ENCODE measurements at regions of chr6 and their contacts with region 1.

Region 1: DNA sequence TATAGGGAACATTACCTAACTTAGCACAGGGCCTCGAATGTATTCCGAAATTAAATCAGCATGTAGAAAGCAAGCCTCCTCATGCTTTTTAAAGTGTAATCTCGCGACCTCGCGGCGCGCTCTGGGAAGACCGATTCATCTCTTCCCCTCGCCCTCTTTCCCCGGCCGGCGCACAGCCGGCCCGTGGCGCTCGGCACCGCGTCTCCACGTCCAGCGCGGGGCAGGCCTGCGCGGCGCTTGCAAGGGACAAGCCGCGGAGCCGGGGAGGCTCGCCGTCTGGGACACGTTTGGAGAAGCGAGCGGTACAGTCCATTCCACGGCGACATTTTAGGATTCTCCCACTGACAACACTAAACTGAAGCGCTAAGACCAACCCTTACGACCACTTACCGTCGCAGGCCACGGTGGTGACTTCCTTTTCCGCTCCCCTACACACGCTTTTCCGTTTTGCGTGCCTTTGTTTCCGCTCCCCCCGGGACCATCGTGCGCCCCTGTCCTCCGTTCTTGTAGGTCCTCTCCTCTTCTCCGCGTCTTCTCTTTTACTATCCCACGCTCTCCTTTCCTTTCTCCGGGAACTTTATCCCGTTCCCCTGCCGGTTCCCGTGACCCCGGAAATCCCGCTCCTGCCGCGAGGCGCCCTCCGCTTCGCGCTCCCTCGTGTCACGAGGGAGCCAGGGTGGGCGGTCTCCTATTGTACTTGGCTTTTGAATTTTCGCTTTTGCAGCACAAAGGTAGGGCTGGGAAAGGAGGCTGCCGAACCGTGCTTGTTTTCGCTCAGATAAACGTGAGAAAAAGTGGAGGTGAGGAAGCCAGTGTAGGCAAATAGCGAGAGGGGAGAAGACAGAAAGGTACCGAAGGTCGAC is at the start of gene ECHDC1:
- DNase-seq: peak; percentile 57
- ATAC-seq: peak; percentile 69
- H3K4me3 Mint-ChIP-seq: no peak within 1 kb of the TSS
- H3K27ac Mint-ChIP-seq: no peak within 1 kb of the TSS
- H3K4me1 Mint-ChIP-seq: peaks cover 12% of the 10 kb centered on the region
- H3K27me3 Mint-ChIP-seq: no peaks in the 10 kb centered on the region
- CTCF ChIP-seq: no peak
- total RNA-seq, gene ECHDC1: 57.3 and 59.7 TPM in 2 replicates

Region 2: GRCh38 chr6:125346201-125346925 is 1996.8 kb before region 1 on chr6:
- CTCF ChIA-PET with region 1: no interaction called
- POLR2A ChIA-PET with region 1: no interaction called
- intact Hi-C with region 1: loop called (anchors 5 kb)
- DNase-seq: no peak
- ATAC-seq: peak; percentile 78
- H3K4me3 Mint-ChIP-seq: no peak overlapping the region
- H3K27ac Mint-ChIP-seq: no peak overlapping the region
- H3K4me1 Mint-ChIP-seq: peaks cover 4% of the 10 kb centered on the region
- H3K27me3 Mint-ChIP-seq: no peaks in the 10 kb centered on the region
- CTCF ChIP-seq: no peak

Region 3: GRCh38 chr6:127332383-127332961 is 10.7 kb before region 1 on chr6:
- CTCF ChIA-PET with region 1: interaction called, 3 read pairs
- POLR2A ChIA-PET with region 1: interaction called, 3 read pairs
- intact Hi-C with region 1: loop called (anchors 1 kb)
- DNase-seq: no peak
- ATAC-seq: no peak
- H3K4me3 Mint-ChIP-seq: no peak overlapping the region
- H3K27ac Mint-ChIP-seq: peak overlapping the region; percentile 54
- H3K4me1 Mint-ChIP-seq: peaks cover 47% of the 10 kb centered on the region
- H3K27me3 Mint-ChIP-seq: no peaks in the 10 kb centered on the region
- CTCF ChIP-seq: no peak

Region 4: GRCh38 chr6:127420556-127420955 is 77.4 kb after region 1 on chr6:
- CTCF ChIA-PET with region 1: no interaction called
- POLR2A ChIA-PET with region 1: interaction called, 3 read pairs
- intact Hi-C with region 1: loop called (anchors 1 kb)
- DNase-seq: no peak
- ATAC-seq: peak; percentile 99
- H3K4me3 Mint-ChIP-seq: peak overlapping the region; percentile 28
- H3K27ac Mint-ChIP-seq: no peak overlapping the region
- H3K4me1 Mint-ChIP-seq: peaks cover 21% of the 10 kb centered on the region
- H3K27me3 Mint-ChIP-seq: no peaks in the 10 kb centered on the region
- CTCF ChIP-seq: no peak

Region 5: DNA sequence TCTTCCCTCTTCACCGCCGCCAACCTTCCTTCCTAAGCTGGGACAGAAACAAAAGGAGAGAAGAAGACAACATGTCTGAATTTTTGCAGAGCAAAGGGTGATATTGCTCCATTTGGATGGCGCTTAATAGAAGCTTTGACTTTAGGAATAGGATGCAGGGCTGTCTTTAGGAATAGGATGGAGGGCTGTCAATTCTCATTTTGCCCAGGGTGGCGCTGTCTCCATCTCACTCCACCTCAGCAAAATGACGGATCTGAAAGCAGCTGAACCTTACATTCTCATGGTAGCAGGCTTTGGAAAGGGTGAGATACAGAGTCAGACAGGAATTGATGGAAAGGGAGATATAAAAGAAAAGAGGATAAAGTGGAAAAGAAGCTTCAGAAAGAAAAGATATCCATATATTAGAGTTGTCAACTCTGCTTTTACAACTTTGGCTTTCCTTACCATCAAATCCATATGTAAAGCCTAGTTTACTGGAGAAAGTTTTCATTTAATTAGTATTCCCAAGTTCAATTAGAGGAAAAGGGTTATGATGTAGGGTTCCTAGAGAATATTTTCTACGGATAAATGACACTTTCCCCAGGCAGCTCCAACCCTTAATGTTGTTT is 173.6 kb after region 1 on chr6:
- CTCF ChIA-PET with region 1: no interaction called
- POLR2A ChIA-PET with region 1: interaction called, 10 read pairs
- intact Hi-C with region 1: loop called (anchors 1 kb)
- DNase-seq: no peak
- ATAC-seq: peak; percentile 41
- H3K4me3 Mint-ChIP-seq: peak overlapping the region; percentile 86
- H3K27ac Mint-ChIP-seq: peak overlapping the region; percentile 35
- H3K4me1 Mint-ChIP-seq: peaks cover 28% of the 10 kb centered on the region
- H3K27me3 Mint-ChIP-seq: peaks cover 46% of the 10 kb centered on the region
- CTCF ChIP-seq: no peak

Measured in activated B cell treated with CpG ODN at 0.5 μM for 24 hours (primary cell).